Kidney (tissue), 22 donors: ENCODE measurements at regions of chr9 and their contacts with region 1.

Region 1: DNA sequence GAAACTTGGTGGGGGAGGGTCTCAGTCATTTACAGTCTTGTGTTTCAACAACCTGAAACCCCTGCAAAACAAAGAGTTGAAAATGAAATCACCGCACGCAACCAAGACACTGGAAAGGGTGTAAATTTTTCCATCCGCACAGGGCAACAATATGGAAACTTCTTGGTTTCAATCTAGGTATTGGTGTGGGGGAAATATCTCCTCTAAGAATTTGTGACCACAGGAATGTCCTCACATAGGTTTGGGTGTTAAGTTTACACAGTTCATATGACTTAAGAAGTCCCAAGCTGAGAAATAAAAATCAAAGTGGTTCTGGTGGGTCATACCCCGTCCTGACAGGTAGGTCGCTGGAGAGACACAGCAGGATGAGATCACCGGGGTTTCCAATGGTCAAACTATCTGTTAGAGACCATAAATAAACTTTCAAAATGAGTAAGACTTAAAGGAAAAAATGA is 51.9 kb upstream of the PIP5K1B start:
- DNase-seq: no peak
- H3K4me3 ChIP-seq: no peak overlapping the region
- H3K27ac ChIP-seq: no peak overlapping the region
- H3K4me1 ChIP-seq: no peaks in the 10 kb centered on the region
- H3K27me3 ChIP-seq: no peaks in the 10 kb centered on the region
- CTCF ChIP-seq: no peak

Region 2: GRCh38 chr9:68455451-68455850 is 197.7 kb before region 1 on chr9:
- intact Hi-C with region 1: loop called (anchors 10 kb)
- DNase-seq: peak in 1 of 5 donors; percentile 21
- H3K4me3 ChIP-seq: no peak overlapping the region
- H3K27ac ChIP-seq: no peak overlapping the region
- H3K4me1 ChIP-seq: no peaks in the 10 kb centered on the region
- H3K27me3 ChIP-seq: no peaks in the 10 kb centered on the region
- CTCF ChIP-seq: no peak